Astrocyte of the cerebellum (primary cell): ENCODE measurements at regions of chr2 and their contacts with region 1.

Region 1: GRCh38 chr2:120463327-120463926 is 117.5 kb downstream of the INHBB start:
- DNase-seq: no peak
- H3K4me3 ChIP-seq: no peak overlapping the region
- CTCF ChIP-seq: no peak

Region 2: DNA sequence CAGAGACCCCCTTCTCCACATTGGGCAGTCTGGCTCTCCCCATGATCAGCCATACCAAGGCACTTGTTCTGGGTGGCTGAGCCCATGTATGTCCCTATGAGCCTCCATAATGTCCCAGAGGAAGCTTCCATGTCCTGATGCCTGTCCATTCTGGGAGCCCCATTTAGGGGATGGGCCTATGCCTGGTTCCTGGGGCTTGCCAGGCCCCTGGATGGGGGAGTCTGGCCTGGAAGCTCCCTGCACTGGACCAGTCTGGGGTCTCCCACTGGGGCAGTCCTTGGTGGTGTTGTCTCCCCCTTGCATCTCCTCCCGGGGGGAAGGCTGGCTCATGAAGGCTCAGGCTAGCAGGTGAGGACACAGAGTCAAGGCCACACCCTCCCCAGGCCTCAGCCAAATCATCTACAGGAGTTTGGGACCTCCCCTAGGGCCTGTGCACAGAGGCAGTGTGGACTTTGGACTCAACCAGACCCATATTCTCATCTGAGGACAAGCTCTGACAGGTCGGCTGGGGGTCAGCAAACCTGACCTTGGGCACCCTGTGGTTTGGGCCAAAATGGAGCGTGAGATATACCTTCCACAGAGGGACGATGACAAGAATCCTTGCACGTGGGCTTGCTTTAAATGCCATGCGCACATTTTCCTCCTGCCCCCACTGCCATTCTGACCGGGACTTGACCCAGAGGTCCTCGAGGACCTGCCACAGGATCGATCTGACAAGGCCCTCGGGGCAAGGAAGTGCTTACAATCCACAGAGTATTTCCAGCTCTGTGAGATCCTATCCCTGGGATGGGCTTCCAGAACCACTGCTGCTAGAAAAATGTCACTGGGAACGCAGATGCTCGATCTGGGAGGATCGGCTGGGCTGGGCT is 78.7 kb before region 1 on chr2:
- in situ Hi-C with region 1: loop called (anchors 5 kb)
- DNase-seq: no peak
- H3K4me3 ChIP-seq: no peak overlapping the region
- CTCF ChIP-seq: no peak